B cell (primary cell): ENCODE measurements at regions of chr6 and their contacts with region 1.

Region 1: DNA sequence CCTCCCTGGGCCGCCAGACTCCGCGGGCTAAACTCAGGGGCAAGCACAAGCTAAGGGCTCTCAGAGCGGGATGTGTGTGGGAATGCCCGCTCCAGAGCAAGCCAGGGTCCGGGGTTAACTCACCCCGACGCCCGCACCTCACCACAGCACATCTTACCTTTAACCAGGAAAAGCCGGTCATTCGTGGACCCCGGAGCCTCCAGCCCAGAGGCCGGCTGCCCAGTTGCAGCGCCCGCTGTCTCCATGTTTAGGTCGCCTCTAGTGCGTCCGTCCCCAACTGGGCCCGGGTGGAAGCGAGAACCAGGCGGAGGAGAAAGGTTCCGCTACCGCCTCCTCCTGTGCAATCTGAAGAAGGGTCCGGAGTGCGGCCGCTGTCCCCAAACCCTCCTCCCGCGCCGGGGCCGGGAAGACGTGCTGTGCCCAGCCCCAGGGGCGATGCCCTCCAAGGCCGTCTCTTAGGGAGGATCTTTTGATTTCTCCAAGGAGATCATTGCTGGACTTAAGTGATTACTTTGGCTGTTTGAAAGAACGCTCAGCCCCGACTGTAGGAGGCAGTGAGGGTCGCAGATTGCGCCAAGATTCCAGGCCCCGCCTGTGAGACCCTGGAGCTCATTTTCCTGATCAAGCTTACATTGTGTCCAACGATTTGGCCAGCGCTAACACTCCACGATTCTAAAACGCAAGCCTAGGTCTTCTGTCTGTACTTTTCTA is at the start of gene TMEM242:
- DNase-seq: peak; percentile 93
- ATAC-seq: peak; percentile 92
- H3K4me3 ChIP-seq: peak within 1 kb of the TSS; percentile 61 to 93 (median 82)
- H3K4me3 Mint-ChIP-seq: peak within 1 kb of the TSS; percentile 97
- H3K27ac ChIP-seq: peak within 1 kb of the TSS; percentile 36 to 76
- H3K27ac Mint-ChIP-seq: peak within 1 kb of the TSS; percentile 92
- H3K4me1 ChIP-seq: peaks cover 10 to 11% of the 10 kb centered on the region in 2 donors
- H3K4me1 Mint-ChIP-seq: peaks cover 14% of the 10 kb centered on the region
- H3K27me3 ChIP-seq: peaks cover 0 to 13% (median 5%) of the 10 kb centered on the region in 4 experiments
- H3K27me3 Mint-ChIP-seq: peaks cover 29% of the 10 kb centered on the region
- CTCF ChIP-seq: peak; percentile 42
- total RNA-seq, gene TMEM242: 24.1 and 25.0 TPM in 2 replicates

Region 2: GRCh38 chr6:157368359-157369049 is 45.1 kb after region 1 on chr6:
- CTCF ChIA-PET with region 1: interaction called, 4 read pairs
- POLR2A ChIA-PET with region 1: no interaction called
- intact Hi-C with region 1: loop called (anchors 5 kb)
- DNase-seq: peak; percentile 19
- ATAC-seq: peak; percentile 29
- H3K4me3 ChIP-seq: no peak overlapping the region
- H3K4me3 Mint-ChIP-seq: peak overlapping the region; percentile 26
- H3K27ac ChIP-seq: no peak overlapping the region
- H3K27ac Mint-ChIP-seq: peak overlapping the region; percentile 54
- H3K4me1 ChIP-seq: peaks cover 22 to 23% of the 10 kb centered on the region in 2 donors
- H3K4me1 Mint-ChIP-seq: peaks cover 18% of the 10 kb centered on the region
- H3K27me3 ChIP-seq: peaks cover 2 to 50% (median 41%) of the 10 kb centered on the region in 4 experiments
- H3K27me3 Mint-ChIP-seq: peaks cover 52% of the 10 kb centered on the region
- CTCF ChIP-seq: no peak

Region 3: GRCh38 chr6:157379656-157380454 is 56.4 kb after region 1 on chr6:
- CTCF ChIA-PET with region 1: interaction called, 9 read pairs
- POLR2A ChIA-PET with region 1: interaction called, 8 read pairs
- intact Hi-C with region 1: loop called (anchors 1 kb)
- DNase-seq: peak; percentile 90
- ATAC-seq: peak; percentile 74
- H3K4me3 ChIP-seq: peak overlapping the region; percentile 42 to 99 (median 93)
- H3K4me3 Mint-ChIP-seq: peak overlapping the region; percentile 80
- H3K27ac ChIP-seq: peak overlapping the region; percentile 55 to 80
- H3K27ac Mint-ChIP-seq: peak overlapping the region; percentile 69
- H3K4me1 ChIP-seq: peaks cover 24 to 32% of the 10 kb centered on the region in 2 donors
- H3K4me1 Mint-ChIP-seq: peaks cover 26% of the 10 kb centered on the region
- H3K27me3 ChIP-seq: peaks cover 0 to 12% (median 5%) of the 10 kb centered on the region in 4 experiments
- H3K27me3 Mint-ChIP-seq: peaks cover 8% of the 10 kb centered on the region
- CTCF ChIP-seq: no peak

Region 4: DNA sequence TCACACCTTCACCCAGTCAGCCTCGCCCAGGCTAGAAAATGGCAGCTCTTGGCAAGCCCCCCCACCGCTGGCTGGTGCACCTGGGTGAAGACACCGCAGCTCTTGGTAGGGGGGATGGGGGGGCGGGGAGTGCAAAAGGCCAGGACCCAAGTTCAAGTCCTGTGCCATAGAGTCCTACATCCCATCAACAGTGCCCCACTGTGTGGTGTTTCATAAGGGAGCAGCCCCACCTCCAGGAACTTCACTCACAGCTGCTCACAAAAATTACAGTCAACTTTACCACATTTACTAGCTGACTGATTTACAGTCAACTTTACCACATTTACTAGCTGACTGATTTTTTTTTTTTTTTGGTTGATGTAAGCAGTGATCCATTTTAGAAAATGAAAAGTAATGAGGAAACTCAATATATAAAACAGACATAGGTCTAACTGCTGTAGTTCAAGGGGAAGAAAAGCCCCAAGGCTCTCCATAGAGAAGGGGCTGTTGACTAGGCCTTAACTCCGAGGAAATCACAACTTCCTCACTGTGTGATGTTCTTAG is 290.7 kb after region 1 on chr6:
- CTCF ChIA-PET with region 1: interaction called, 47 read pairs
- POLR2A ChIA-PET with region 1: interaction called, 4 read pairs
- intact Hi-C with region 1: no loop called
- DNase-seq: peak; percentile 65
- ATAC-seq: peak; percentile 64
- H3K4me3 ChIP-seq: no peak overlapping the region
- H3K4me3 Mint-ChIP-seq: peak overlapping the region; percentile 67
- H3K27ac ChIP-seq: peak overlapping the region; percentile 57 to 68
- H3K27ac Mint-ChIP-seq: peak overlapping the region; percentile 83
- H3K4me1 ChIP-seq: peaks cover 36 to 67% of the 10 kb centered on the region in 2 donors
- H3K4me1 Mint-ChIP-seq: peaks cover 59% of the 10 kb centered on the region
- H3K27me3 ChIP-seq: no peaks in the 10 kb centered on the region
- H3K27me3 Mint-ChIP-seq: no peaks in the 10 kb centered on the region
- CTCF ChIP-seq: no peak